Right ventricle myocardium inferior (tissue), 1 donor: ENCODE measurements at regions of chr19 and their contacts with region 1.

Region 1: GRCh38 chr19:8005534-8006256 is at the start of gene ELAVL1:
- DNase-seq: peak; percentile 94
- ATAC-seq: peak; percentile 94
- total RNA-seq, gene ELAVL1: 55.1 TPM

Region 2: GRCh38 chr19:7829561-7830271 is 176.0 kb before region 1 on chr19 and contains the start of gene EVI5L:
- intact Hi-C with region 1: loop called (anchors 10 kb)
- DNase-seq: peak; percentile 99
- ATAC-seq: peak; percentile 93
- total RNA-seq, gene EVI5L: 21.5 TPM

Region 3: DNA sequence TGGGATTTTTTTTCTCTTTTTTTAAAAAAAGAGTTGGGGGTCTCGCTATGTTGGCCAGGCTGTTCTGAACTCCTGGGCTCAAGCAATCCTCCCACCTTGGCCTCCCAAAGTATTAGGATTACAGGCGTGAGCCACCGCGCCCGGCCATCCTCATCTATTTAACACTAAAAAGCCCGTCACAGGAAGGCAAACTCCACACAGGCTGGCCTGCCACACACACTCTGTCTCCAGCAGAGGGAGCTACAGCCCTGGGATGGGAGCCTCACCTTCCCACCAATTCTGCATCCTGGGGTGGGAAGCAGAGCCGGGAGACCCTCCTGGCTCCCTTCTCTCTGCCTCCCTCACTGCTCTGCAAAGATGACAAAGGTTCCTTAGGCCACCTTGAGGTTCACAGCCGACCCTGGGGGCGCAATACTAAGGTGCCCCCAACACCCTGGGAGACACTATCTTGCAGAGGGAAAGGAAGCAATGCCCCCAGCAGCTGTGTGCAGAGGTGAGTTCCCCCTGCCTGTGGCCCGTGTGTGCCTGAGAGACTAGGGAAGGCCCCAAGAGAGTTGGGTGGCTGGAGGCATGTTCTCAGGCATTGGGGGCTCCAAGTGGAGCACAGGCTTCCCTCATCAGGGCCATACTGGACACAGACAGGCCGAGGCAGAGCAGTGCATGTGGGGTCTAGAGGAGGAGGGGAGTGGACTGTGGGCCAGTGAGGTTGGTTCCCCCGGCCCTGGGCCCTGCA is 34.8 kb before region 1 on chr19:
- intact Hi-C with region 1: loop called (anchors 1 kb)
- DNase-seq: no peak
- ATAC-seq: no peak